CD8-positive, alpha-beta T cell (primary cell): ENCODE measurements at regions of chr21 and their contacts with region 1.

Region 1: GRCh38 chr21:42309753-42310221 is 5.4 kb downstream of the TFF3 start:
- DNase-seq: peak; percentile 48 to 80 (median 73)
- ATAC-seq: peak; percentile 75
- H3K4me3 ChIP-seq: no peak overlapping the region
- H3K4me3 Mint-ChIP-seq: no peak overlapping the region
- H3K27ac ChIP-seq: no peak overlapping the region
- H3K27ac Mint-ChIP-seq: no peak overlapping the region
- H3K4me1 ChIP-seq: peaks cover 18% of the 10 kb centered on the region
- H3K4me1 Mint-ChIP-seq: peaks cover 8% of the 10 kb centered on the region
- H3K27me3 ChIP-seq: peaks cover 0 to 2% of the 10 kb centered on the region in 2 experiments
- H3K27me3 Mint-ChIP-seq: peaks cover 5% of the 10 kb centered on the region
- CTCF ChIP-seq: peak; percentile 70

Region 2: DNA sequence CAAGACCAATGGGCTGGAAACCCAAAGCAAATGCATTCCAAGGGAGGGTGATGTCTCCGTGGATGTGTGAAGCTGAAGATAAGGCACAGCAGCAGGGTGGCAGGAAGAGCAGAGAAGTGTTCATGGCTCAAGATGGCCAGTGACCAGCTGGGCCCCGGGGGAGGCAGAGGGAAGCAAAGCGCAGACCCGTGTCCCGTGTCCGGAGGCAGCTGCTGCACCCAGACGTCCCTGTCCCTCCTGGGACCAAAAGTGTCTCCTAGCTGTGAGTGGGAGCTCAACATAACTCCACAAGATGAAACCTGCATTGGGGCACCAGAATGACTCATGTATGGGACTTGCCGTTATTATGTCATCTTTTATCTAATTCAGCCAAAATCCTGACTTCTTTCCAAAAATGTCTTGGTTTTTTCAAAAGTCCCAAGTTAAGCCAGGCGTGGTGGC is 661.2 kb before region 1 on chr21:
- CTCF ChIA-PET with region 1: no interaction called
- POLR2A ChIA-PET with region 1: no interaction called
- intact Hi-C with region 1: no loop called
- DNase-seq: no peak
- ATAC-seq: no peak
- H3K4me3 ChIP-seq: no peak overlapping the region
- H3K4me3 Mint-ChIP-seq: no peak overlapping the region
- H3K27ac ChIP-seq: no peak overlapping the region
- H3K27ac Mint-ChIP-seq: no peak overlapping the region
- H3K4me1 ChIP-seq: no peaks in the 10 kb centered on the region
- H3K4me1 Mint-ChIP-seq: no peaks in the 10 kb centered on the region
- H3K27me3 ChIP-seq: no peaks in the 10 kb centered on the region
- H3K27me3 Mint-ChIP-seq: peaks cover 2% of the 10 kb centered on the region
- CTCF ChIP-seq: no peak

Region 3: DNA sequence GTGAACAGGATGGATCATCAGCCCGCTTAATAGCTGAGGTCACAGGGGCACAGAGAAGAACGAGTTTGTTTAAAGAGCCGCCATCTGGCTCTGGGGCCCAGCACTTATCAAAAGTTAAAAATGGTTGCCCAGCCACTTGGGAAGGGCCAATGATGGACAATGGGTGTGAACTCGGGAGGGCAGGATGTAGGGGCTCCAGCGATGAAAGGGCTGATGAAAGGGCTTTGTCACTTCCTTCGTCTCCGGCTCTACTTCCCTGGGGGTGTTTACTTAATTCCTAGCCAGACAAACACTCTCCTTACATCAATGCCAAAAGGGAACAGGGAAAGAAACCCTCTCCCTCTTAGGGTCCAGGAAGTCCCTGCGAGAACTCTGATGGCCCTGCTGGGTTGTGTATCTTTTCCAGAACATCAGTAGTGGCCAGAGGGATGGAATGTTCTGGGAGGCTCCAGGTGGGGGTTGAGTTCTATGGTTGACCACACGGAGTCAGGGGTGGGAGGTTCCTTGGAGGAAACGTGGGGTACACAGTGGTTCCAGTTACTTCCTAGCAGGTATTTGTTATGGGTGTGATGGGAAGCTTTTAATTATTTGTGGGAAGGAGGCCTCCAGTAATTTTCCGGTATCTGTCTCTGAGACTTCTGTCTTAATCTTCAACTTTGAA is 99.8 kb before region 1 on chr21:
- CTCF ChIA-PET with region 1: no interaction called
- POLR2A ChIA-PET with region 1: no interaction called
- intact Hi-C with region 1: no loop called
- DNase-seq: no peak
- ATAC-seq: no peak
- H3K4me3 ChIP-seq: no peak overlapping the region
- H3K4me3 Mint-ChIP-seq: no peak overlapping the region
- H3K27ac ChIP-seq: no peak overlapping the region
- H3K27ac Mint-ChIP-seq: no peak overlapping the region
- H3K4me1 ChIP-seq: no peaks in the 10 kb centered on the region
- H3K4me1 Mint-ChIP-seq: no peaks in the 10 kb centered on the region
- H3K27me3 ChIP-seq: no peaks in the 10 kb centered on the region
- H3K27me3 Mint-ChIP-seq: no peaks in the 10 kb centered on the region
- CTCF ChIP-seq: no peak

Region 4: DNA sequence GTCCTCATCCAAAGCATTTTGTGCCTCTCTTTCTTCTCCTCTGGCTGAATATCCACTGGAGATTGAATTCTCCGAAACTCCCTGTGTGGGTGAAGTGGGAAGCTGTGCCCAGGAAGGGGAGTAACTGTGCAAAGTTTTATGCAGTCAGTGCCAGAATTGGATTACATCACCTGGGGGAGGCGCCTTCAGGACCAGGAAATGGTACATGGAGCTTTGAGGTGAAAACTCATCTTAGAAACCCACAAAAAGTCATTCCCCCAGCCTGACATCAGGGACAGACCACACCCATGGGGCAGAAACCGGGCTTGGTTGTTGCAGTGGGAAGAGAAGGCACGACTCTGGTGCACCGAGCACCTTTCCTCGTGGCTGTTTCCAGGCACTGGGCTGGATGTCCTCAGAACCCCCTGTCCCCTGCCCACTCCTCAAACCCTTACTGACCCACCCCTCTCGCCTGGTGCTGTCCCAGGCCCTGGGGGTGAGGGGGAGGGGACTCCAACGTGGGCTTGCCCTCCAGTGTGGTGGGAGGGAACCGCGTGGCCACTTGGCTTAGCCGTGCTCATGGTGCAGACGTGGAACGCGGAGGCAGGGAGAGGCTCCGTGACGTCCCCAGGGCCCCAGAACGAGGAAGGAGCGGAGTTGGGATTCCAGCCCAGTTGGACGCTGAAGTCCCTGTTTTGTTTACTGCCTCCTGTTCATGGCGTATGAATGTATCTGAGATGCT is 10.3 kb before region 1 on chr21:
- CTCF ChIA-PET with region 1: interaction called, 13 read pairs
- POLR2A ChIA-PET with region 1: no interaction called
- intact Hi-C with region 1: no loop called
- DNase-seq: peak in 1 of 9 experiments; percentile 53
- ATAC-seq: peak; percentile 54
- H3K4me3 ChIP-seq: no peak overlapping the region
- H3K4me3 Mint-ChIP-seq: no peak overlapping the region
- H3K27ac ChIP-seq: no peak overlapping the region
- H3K27ac Mint-ChIP-seq: no peak overlapping the region
- H3K4me1 ChIP-seq: peaks cover 8% of the 10 kb centered on the region
- H3K4me1 Mint-ChIP-seq: peaks cover 7% of the 10 kb centered on the region
- H3K27me3 ChIP-seq: no peaks in the 10 kb centered on the region
- H3K27me3 Mint-ChIP-seq: no peaks in the 10 kb centered on the region
- CTCF ChIP-seq: no peak

Region 5: DNA sequence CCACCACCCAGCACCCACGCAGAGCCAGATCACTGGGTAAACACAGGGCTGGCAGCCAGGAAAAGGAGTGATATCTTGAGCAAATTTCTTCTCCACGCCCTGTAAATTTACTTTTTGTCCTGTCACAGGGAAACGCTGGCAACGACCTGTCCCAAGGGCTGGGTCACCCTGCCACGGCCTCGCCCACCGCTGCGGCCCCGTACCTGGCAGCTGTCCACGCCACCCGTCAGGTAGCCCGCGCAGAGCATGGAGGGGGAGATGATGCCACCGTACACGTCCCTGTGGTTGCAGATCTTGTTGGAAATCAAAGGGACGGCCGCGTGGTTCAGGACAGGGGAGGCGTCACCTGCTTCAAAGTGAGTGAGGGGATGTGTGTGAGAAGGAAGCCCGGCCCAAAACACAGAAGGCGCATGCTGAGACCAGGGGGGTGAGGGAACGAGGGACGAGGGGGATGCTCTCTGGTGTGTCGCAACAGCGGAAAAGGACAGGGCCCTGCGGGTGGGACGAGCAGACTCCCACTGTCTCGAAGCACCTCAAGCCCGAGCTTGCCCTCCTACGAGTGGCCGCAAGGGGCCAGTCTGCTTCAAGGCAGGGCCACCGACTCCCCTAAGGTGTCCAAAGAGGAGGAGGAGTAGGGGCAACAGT is 66.7 kb after region 1 on chr21:
- CTCF ChIA-PET with region 1: no interaction called
- POLR2A ChIA-PET with region 1: no interaction called
- intact Hi-C with region 1: no loop called
- DNase-seq: no peak
- ATAC-seq: no peak
- H3K4me3 ChIP-seq: no peak overlapping the region
- H3K4me3 Mint-ChIP-seq: no peak overlapping the region
- H3K27ac ChIP-seq: no peak overlapping the region
- H3K27ac Mint-ChIP-seq: no peak overlapping the region
- H3K4me1 ChIP-seq: no peaks in the 10 kb centered on the region
- H3K4me1 Mint-ChIP-seq: peaks cover 9% of the 10 kb centered on the region
- H3K27me3 ChIP-seq: no peaks in the 10 kb centered on the region
- H3K27me3 Mint-ChIP-seq: no peaks in the 10 kb centered on the region
- CTCF ChIP-seq: no peak

Region 6: DNA sequence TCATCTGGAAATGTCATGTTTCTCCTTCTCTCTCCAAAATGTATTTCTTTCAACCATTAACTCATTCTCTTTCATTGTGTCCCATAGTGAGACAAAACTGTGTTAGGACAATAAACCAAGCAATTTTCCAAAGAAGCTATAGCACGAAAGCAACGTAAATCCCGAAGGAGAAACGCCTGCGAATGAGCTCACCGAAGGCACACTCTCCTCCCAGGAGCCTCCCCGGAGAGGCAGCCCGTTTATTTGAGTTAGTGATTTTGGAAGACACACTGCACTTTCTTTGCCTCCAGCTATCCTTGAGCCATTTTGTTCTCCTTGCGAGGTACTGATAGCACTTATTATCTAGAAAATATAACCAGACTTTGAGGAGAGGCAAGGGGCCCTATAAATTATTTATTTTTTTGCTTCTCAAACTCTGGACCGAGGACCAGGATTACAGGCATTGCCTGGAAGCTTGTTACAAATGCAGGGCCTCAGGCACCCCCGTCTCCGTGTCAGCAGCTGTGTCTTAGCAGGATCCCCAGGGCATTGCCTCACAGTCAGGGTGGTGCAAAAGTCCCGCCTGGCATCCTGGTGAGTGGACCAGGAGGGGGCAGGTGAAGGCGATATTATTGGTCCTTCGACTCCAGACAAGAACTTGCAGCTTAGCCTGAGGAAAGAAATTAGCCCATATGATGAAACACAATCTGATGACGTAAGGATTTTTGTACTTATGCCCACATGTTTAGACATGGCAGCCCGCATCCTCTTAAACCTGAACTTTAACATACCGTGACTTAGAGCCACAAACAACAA is 145.2 kb after region 1 on chr21:
- CTCF ChIA-PET with region 1: interaction called, 36 read pairs
- POLR2A ChIA-PET with region 1: no interaction called
- intact Hi-C with region 1: loop called (anchors 1 kb)
- DNase-seq: no peak
- ATAC-seq: no peak
- H3K4me3 ChIP-seq: no peak overlapping the region
- H3K4me3 Mint-ChIP-seq: no peak overlapping the region
- H3K27ac ChIP-seq: no peak overlapping the region
- H3K27ac Mint-ChIP-seq: no peak overlapping the region
- H3K4me1 ChIP-seq: peaks cover 20% of the 10 kb centered on the region
- H3K4me1 Mint-ChIP-seq: peaks cover 35% of the 10 kb centered on the region
- H3K27me3 ChIP-seq: no peaks in the 10 kb centered on the region
- H3K27me3 Mint-ChIP-seq: no peaks in the 10 kb centered on the region
- CTCF ChIP-seq: no peak

Region 7: DNA sequence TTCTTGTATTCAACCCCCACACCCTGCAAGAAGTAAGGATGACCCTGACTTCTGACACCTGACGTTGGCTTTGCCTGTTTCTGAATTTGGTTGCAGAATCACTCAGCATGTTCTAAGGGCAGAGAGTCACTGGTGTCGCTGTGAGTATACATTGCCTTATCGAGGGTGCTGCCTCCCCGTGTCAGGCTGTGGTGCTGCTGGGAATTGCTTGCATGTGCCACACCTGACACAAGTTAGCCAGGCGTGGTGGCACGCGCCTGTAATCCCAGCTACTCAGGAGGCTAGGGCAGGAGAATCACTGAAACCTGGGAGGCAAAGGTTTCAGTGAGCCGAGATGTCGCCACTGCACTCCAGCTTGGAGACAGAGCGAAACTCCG is 523.6 kb after region 1 on chr21:
- CTCF ChIA-PET with region 1: no interaction called
- POLR2A ChIA-PET with region 1: no interaction called
- intact Hi-C with region 1: loop called in 1 of 2 experiments (anchors 10 kb)
- DNase-seq: peak in 7 of 9 experiments; percentile 31 to 70 (median 59)
- ATAC-seq: peak; percentile 75
- H3K4me3 ChIP-seq: peak overlapping the region in 1 of 2 experiments; percentile 22
- H3K4me3 Mint-ChIP-seq: peak overlapping the region; percentile 68
- H3K27ac ChIP-seq: no peak overlapping the region
- H3K27ac Mint-ChIP-seq: no peak overlapping the region
- H3K4me1 ChIP-seq: peaks cover 29% of the 10 kb centered on the region
- H3K4me1 Mint-ChIP-seq: peaks cover 34% of the 10 kb centered on the region
- H3K27me3 ChIP-seq: peaks cover 0 to 4% of the 10 kb centered on the region in 2 experiments
- H3K27me3 Mint-ChIP-seq: no peaks in the 10 kb centered on the region
- CTCF ChIP-seq: peak; percentile 38